HCT116 (cell line): ENCODE measurements at regions of chr5 and their contacts with region 1.

Region 1: DNA sequence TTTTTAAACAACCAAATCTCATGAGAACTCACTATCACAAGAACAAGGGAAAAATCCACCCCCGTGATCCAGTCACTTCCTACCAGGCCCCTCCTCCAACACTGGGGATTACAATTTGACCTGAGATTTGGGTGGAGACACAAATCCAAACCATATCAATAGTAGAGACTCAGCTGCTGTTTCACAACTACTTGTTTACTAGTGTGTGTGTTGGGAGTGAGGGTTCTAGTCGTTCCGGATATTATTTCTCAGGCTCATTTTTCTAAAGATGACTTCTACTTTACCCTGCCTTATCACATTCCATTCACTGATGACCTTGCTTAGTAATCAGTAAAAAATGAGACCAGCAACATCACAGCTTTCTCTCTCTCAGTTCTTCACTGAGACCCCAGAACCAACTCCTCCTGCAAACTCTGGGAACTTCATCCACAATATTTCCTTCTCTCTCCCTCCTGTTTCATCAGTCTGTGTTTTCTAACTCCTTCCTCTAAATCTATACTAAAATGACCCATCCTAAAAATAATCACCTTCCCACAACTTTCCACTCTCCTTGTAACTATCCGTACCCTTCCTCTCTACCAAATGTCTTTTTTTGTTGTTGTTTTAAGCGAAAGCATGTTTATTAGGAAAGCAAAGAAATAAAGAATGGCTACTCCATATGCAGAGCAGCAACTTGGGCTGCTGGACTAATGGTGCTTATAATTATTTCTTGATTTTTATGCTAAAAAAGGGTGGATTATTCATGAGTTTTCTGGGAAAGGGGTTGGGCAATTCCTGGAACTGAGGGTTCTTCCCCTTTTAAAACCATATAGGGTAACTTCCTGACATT is 121.5 kb upstream of the SPRY4 start:
- DNase-seq: peak; percentile 80
- ATAC-seq: peak; percentile 60
- H3K4me3 ChIP-seq: peak overlapping the region; percentile 35 to 37
- H3K27ac ChIP-seq: peak overlapping the region; percentile 87
- H3K4me1 ChIP-seq: peaks cover 58 to 66% of the 10 kb centered on the region in 2 experiments
- H3K27me3 ChIP-seq: no peaks in the 10 kb centered on the region
- CTCF ChIP-seq: no peak
- POLR2A ChIP-seq: peak; percentile 18
- RAD21 ChIP-seq: no peak

Region 2: DNA sequence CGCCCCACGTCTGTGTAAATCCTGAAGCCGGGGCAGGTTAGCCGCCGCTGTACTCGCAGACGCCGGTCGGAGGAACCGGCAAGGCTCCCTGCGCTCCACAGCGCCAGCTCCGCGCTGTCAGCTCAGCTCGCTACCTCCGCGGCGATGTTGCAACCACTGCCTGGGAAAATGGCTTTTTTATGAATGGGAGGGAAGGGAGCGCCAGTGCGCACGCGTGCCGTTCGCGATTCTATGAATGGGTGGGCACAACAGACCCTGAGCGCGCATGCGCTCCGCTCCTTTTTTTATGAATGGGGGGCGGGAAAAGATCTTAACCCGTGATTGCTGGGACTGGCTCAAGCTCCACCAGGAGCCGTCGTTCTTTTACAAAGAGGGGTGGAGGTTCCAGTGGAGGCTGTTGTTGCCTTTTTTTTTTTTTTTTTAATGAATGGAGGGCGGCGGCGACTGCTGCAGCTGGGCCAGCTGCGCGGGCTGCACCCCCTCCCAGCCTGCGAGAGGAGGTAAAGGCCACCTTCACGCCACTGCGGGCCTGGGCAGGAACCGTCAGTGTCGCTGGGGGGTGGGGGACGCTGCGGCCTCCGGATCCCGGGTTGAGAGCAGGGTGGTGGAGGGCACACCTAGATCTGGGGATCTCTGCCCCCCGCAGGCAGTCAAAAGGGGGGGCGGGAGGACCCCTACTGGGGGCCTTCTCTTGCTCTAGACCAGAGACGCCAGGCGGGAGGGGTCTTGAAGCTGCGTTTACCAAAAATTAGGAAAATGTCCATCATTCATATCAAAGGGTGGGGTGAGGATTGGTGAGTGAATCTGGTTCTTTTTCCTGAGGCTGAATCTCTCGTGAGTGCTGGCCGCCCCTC is 121.2 kb before region 1 on chr5 and contains the start of gene SPRY4:
- CTCF ChIA-PET with region 1: no interaction called
- POLR2A ChIA-PET with region 1: interaction called, 18 read pairs
- RAD21 ChIA-PET with region 1: no interaction called
- intact Hi-C with region 1: loop called (anchors 2 kb)
- DNase-seq: peak; percentile 95
- ATAC-seq: peak; percentile 51
- H3K4me3 ChIP-seq: peak within 1 kb of the TSS; percentile 78 to 98
- H3K27ac ChIP-seq: peak within 1 kb of the TSS; percentile 98
- H3K4me1 ChIP-seq: peaks cover 61 to 72% of the 10 kb centered on the region in 2 experiments
- H3K27me3 ChIP-seq: no peaks in the 10 kb centered on the region
- CTCF ChIP-seq: 0 out of 6 replicates have a peak, but pooled peaks of 1 of the 3 experiments have one; percentile 5
- POLR2A ChIP-seq: peak; percentile 98
- RAD21 ChIP-seq: no peak
- total RNA-seq, gene SPRY4: 112 TPM

Region 3: DNA sequence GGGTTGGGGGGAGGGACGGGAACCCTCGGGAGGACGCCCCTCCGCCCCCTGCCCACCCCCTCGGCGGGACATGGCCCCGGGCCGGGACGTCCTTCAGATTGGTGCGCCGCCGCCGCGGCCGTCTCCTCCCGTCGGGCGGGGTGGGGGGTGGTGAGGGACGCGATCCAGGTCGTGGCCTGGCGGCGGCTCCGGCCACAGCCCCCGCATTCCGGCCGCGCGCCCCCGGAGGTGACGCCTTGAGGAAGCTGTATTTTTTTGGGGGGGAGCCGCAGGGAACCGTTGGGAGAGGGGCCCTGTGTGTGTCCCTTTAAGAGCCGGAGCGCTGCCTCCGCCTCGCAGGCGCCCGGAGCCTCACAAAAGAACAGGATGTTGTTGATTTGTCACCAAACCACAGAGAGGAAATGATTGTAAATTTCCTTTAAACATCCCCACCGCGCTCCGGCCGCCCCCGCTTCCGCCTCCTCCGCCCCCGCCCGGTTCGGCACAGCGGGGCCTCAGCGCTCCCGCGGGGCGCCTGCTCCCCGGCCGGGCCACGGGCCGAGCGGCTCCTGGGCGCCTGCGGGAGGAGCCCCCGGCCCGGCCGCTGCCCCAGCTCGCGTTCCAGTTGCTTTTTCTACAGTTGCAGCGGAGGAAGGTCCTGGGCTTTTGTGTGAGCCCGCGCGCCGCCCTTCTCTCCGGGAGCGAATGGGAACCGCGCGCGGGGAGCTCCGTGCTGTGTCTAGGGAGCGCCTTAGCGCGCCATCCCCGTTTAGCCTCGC is 89.5 kb before region 1 on chr5:
- CTCF ChIA-PET with region 1: no interaction called
- POLR2A ChIA-PET with region 1: interaction called, 11 read pairs
- RAD21 ChIA-PET with region 1: no interaction called
- intact Hi-C with region 1: loop called (anchors 1 kb)
- DNase-seq: peak; percentile 87
- ATAC-seq: peak; percentile 67
- H3K4me3 ChIP-seq: peak overlapping the region; percentile 43 to 59
- H3K27ac ChIP-seq: peak overlapping the region; percentile 99
- H3K4me1 ChIP-seq: peaks cover 72 to 86% of the 10 kb centered on the region in 2 experiments
- H3K27me3 ChIP-seq: no peaks in the 10 kb centered on the region
- CTCF ChIP-seq: no peak
- POLR2A ChIP-seq: no peak
- RAD21 ChIP-seq: no peak

Region 4: GRCh38 chr5:142472300-142472951 is 26.1 kb after region 1 on chr5:
- CTCF ChIA-PET with region 1: no interaction called
- POLR2A ChIA-PET with region 1: interaction called, 10 read pairs
- RAD21 ChIA-PET with region 1: no interaction called
- intact Hi-C with region 1: loop called (anchors 1 kb)
- DNase-seq: peak; percentile 97
- ATAC-seq: peak; percentile 89
- H3K4me3 ChIP-seq: peak overlapping the region; percentile 21 to 36
- H3K27ac ChIP-seq: peak overlapping the region; percentile 67
- H3K4me1 ChIP-seq: peaks cover 28 to 48% of the 10 kb centered on the region in 2 experiments
- H3K27me3 ChIP-seq: no peaks in the 10 kb centered on the region
- CTCF ChIP-seq: no peak
- POLR2A ChIP-seq: no peak
- RAD21 ChIP-seq: no peak